AG04450 (cell line): ENCODE measurements at regions of chr6 and their contacts with region 1.

Region 1: GRCh38 chr6:139698526-139699176 is 324.2 kb upstream of the CITED2 start:
- DNase-seq: no peak
- H3K4me3 ChIP-seq: no peak overlapping the region
- H3K27ac ChIP-seq: no peak overlapping the region
- H3K27me3 ChIP-seq: no peaks in the 10 kb centered on the region
- CTCF ChIP-seq: no peak

Region 2: GRCh38 chr6:139679516-139680179 is 19.0 kb before region 1 on chr6:
- CTCF ChIA-PET with region 1: no interaction called
- POLR2A ChIA-PET with region 1: interaction called, 11 read pairs
- DNase-seq: no peak
- H3K4me3 ChIP-seq: no peak overlapping the region
- H3K27ac ChIP-seq: no peak overlapping the region
- H3K27me3 ChIP-seq: no peaks in the 10 kb centered on the region
- CTCF ChIP-seq: no peak